IMR-90 (cell line): ENCODE measurements at regions of chr3 and their contacts with region 1.

Region 1: DNA sequence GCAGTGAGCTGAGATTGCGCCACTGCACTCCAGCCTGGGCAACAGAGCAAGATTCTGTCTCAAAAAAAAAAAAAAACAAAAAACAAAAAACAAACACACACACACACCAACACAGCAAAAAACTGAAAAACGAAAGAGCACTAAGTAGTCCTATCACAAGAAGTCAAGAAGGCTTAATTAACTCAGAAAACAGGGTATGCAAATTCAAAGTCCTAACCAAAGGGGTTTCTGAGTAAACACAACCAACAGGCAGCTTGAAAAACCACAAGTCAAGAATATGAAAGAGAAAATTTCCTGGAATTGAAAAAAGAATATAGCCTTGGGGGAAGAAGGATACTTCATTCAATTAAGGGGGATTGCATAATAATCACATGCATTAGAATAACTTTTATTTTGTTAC is 37.7 kb upstream of the PARP14 start:
- DNase-seq: no peak
- ATAC-seq: no peak
- H3K4me3 ChIP-seq: no peak overlapping the region
- H3K27ac ChIP-seq: no peak overlapping the region
- H3K4me1 ChIP-seq: peaks cover 2% of the 10 kb centered on the region; the same call in 1 of the 2 replicates
- H3K27me3 ChIP-seq: peaks cover 26% of the 10 kb centered on the region
- CTCF ChIP-seq: no peak
- POLR2A ChIP-seq: no peak
- RAD21 ChIP-seq: no peak

Region 2: DNA sequence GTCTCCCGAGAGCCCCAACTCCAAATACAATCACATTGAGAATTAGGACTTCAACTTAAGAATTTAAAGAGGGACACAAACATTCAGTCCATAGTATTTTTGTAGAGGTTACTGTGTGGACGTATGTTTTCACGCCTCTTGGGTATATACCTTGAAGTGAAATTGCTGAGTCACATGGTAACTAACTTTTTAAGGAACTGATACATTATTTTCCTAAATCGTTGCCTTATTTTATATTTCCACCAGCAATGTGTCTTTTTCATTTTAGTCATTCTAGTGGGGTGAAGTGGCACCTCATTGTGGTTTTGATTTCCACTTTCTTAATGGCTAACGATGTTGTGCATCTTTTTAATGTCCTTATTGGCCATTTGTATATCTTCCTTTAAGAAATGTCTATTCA is 53.6 kb before region 1 on chr3:
- CTCF ChIA-PET with region 1: interaction called, 3 read pairs
- POLR2A ChIA-PET with region 1: no interaction called
- dilution Hi-C with region 1: no loop called
- in situ Hi-C with region 1: no loop called
- intact Hi-C with region 1: loop called (anchors 5 kb)
- DNase-seq: no peak
- ATAC-seq: no peak
- H3K4me3 ChIP-seq: no peak overlapping the region
- H3K27ac ChIP-seq: no peak overlapping the region
- H3K4me1 ChIP-seq: no peaks in the 10 kb centered on the region
- H3K27me3 ChIP-seq: 0 out of 2 replicates have a peak, but pooled peaks cover 1% of the 10 kb centered on the region
- CTCF ChIP-seq: no peak
- POLR2A ChIP-seq: no peak
- RAD21 ChIP-seq: no peak